ENCODE measurements at regions of chr18 and their contacts with region 1.

Region 1: DNA sequence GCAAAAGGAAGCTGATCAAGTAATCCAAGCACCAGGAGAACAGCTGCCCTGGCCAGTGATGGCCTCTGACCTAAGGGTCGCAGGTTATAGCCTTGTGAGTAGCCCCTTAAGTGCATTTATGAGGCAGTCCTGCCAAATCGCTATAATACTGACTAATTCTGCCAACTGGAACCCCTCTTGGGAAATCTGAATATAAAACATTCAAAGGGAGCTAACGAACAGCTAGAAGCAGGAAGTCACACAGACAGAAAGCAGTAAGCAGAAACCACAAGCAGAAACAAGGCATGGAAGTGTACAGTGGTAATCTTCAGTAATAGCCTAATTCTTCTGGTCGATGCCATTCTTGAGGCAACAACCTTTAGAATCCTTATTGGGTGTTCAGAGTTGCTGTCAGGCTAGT is 521.3 kb downstream of the METTL4 start:
- DNase-seq: no peak

Region 2: GRCh38 chr18:1917141-1917935 is 132.6 kb before region 1 on chr18:
- intact Hi-C with region 1: no loop called
- DNase-seq: no peak

Region 3: DNA sequence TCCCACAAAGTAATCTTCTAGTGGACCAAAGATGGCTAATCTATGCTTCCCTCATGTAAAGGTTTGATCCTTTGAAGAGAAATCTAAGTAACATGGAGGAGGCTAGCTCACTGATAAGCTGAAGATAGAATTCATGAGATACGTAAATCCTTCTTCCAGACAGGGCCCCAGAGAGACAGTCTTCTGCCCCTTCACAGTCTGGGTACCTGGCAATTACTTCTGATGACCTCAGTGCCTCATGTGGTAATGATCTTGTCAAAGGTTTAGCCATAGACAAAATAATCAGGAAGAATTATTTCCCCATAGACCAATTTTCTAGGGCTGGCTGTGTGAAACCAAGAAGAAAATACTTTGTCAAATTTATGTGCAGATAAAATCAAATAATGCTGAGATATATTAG is 25.5 kb after region 1 on chr18:
- intact Hi-C with region 1: loop called in 1 of 2 experiments (anchors 2 kb)
- DNase-seq: no peak

Measured in posterior vena cava (tissue), 2 donors.